GM23248 (cell line): ENCODE measurements at regions of chr4 and their contacts with region 1.

Region 1: DNA sequence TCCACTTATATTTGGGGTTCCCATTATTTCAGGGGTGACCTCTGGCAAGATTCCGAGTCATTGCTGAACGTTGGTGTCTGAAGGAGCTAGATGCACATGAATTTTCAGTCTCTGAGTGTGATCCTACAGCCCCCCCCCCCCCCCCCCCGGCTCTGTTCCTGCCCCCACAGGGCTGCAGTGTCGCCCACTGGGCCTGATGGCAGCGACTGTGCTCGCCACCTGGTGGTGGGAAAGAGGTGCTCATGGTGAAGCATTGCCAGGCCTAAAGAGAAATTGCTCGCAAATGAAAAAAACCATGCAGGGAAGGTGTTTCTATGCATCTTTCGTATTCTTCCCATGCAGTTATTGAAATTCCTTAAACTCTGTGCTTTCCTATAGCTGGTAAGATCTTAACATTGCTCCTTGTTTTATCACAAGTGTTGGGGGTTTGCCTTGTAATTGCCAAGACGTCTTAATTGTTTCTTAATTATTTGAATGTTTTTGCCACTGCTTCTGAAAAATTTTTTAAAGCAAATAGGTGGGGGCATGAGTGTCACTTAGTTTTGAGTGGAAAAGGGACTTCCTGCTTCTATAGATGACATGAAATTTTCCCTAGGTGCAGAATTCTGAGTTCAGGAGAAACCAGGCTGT is 63.2 kb downstream of the CLDN22 start:
- DNase-seq: peak; percentile 75
- H3K4me3 ChIP-seq: no peak overlapping the region
- H3K27ac ChIP-seq: peak overlapping the region; percentile 20; the same call in 1 of the 2 replicates
- H3K4me1 ChIP-seq: peaks cover 7% of the 10 kb centered on the region; the same call in 1 of the 2 replicates
- H3K27me3 ChIP-seq: no peaks in the 10 kb centered on the region

Region 2: GRCh38 chr4:183074296-183074990 is 182.4 kb before region 1 on chr4:
- in situ Hi-C with region 1: loop called (anchors 5 kb)
- DNase-seq: peak; percentile 53
- H3K4me3 ChIP-seq: no peak overlapping the region
- H3K27ac ChIP-seq: no peak overlapping the region
- H3K4me1 ChIP-seq: peaks cover 23% of the 10 kb centered on the region
- H3K27me3 ChIP-seq: no peaks in the 10 kb centered on the region

Region 3: GRCh38 chr4:183366206-183366835 is 109.5 kb after region 1 on chr4:
- in situ Hi-C with region 1: no loop called
- DNase-seq: no peak
- H3K4me3 ChIP-seq: no peak overlapping the region
- H3K27ac ChIP-seq: no peak overlapping the region
- H3K4me1 ChIP-seq: no peaks in the 10 kb centered on the region
- H3K27me3 ChIP-seq: no peaks in the 10 kb centered on the region